Endothelial cell of umbilical vein (primary cell): ENCODE measurements at regions of chr1 and their contacts with region 1.

Region 1: DNA sequence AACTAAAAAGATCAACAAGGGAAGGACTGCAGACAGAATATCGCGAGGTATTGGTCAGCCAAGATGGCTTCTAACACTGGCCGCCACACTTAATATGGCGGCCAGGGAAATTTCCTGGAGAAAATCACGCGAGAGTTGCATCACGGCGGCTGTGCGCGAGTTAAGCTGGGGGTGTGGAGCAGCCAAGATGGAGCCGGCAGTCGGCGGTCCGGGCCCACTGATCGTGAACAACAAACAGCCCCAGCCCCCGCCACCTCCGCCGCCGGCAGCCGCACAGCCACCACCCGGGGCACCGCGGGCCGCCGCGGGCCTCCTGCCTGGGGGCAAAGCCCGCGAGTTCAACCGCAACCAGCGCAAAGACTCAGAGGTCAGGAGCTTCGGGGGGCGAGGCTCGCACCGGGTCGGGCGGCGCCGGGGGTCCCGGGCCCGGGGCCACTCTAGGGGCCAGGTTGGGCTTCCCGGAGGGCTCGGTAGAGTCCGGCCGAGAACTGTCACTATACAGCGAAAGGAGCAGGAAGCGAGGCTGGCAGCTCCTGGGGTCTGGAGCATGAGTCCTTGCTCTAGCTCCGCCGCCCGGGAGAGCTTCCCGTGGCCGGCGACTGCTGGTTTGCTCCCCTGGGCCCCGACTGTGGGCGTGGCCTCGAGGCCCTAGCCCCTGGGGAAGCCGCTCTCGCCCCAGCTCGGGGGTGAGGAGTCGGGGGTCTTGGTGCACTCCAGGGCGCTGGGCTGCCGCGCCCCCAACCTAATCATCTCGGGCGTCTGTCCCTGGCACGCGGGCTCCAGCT is at the start of gene STRIP1:
- DNase-seq: peak; percentile 96
- H3K4me3 ChIP-seq: peak within 1 kb of the TSS; percentile 76 to 90 (median 82)
- H3K27ac ChIP-seq: peak within 1 kb of the TSS; percentile 61
- H3K4me1 ChIP-seq: peaks cover 9% of the 10 kb centered on the region
- H3K27me3 ChIP-seq: no peaks in the 10 kb centered on the region
- CTCF ChIP-seq: no peak
- POLR2A ChIP-seq: peak; percentile 74
- total RNA-seq, gene STRIP1: 38.9 and 42.1 TPM in 2 replicates

Region 2: DNA sequence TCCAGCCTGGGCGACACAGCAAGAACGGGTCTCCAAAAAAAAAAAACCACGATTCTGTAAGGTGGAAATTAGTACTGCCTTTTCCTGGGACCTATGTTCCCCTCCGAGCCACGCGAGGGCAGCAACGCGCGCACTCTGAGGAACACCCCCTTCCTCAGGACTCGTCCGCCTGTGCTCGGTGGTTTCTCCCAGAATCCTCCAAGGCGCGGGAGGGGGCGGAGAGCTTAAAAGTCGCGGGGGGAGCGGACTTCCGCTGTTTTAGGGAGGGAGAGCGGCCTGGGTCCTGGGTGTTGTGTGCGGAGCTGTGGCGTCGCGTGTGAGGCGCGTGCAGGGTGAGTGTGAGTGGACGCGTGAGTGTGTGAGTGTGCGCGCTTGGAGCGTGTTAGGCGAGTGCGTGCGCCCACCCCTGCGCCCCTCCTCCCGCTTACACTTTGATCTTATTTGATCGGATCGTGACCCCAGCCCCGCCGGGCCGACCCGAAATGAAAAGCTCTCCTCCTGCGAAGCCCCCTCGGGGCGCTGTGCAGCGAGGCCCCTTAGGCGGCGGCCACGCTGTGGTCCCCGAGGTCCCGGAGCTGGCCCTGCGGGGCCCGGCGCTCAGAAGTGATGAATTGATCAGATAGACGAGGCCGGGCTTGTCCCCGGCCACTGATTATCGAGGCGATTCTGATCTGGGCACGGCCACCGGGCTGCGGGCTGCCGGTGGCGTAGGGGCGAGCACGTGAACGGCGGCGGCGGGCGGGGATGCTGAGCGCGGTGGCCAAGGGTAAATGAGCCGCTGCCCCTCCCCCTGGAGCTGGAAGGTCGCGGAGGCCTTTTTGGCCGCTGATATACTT is 934.5 kb before region 1 on chr1:
- CTCF ChIA-PET with region 1: no interaction called
- POLR2A ChIA-PET with region 1: no interaction called
- dilution Hi-C with region 1: no loop called
- intact Hi-C with region 1: loop called (anchors 10 kb)
- DNase-seq: peak; percentile 95
- H3K4me3 ChIP-seq: peak overlapping the region; percentile 62 to 97 (median 90)
- H3K27ac ChIP-seq: peak overlapping the region; percentile 76
- H3K4me1 ChIP-seq: no peaks in the 10 kb centered on the region
- H3K27me3 ChIP-seq: no peaks in the 10 kb centered on the region
- CTCF ChIP-seq: peak; percentile 90 to 94
- POLR2A ChIP-seq: peak; percentile 99

Region 3: DNA sequence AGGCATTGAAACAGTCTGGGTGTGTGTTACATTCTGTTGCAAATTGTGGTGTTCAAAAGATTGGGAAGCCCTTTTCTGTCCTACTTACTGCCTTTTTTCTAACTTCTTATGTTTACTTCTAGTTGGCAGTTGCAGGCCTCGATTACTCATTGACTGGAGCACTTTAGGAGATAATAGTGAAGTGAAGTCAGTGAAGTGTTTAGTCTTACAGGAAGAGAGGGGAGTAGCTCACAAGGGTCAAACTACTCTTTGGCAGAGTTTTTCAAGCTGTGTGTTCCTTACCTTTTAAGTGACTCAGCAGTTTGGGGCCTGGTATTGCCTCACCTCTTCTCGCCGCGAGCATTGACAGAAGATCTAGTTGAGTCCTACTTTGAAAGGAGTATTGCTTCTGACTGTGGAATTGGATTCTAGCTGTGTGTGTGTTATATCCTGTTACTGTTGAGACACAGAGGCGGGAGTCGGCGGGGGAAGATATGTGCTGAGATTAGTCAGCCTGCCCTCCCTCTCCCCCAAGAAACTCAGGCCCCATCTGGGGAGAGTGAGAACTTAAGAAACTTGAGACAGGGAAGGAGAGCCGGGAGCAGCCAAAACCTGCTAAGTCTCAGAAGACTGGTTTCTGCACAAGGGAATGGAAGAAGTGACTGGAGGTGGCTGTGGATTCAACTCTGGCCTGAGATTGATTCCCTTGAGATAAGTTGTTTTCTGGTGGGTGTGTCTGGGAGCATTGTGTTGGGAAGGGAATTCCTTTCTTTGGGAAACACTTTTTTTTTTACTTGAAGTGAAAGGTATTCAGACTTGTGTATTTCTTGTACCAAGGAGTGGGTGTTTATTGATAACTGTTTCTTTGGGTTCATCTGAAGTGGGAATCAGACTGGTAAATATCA is 30.7 kb before region 1 on chr1:
- CTCF ChIA-PET with region 1: interaction called, 13 read pairs
- POLR2A ChIA-PET with region 1: no interaction called
- dilution Hi-C with region 1: no loop called
- intact Hi-C with region 1: no loop called
- DNase-seq: peak; percentile 93
- H3K4me3 ChIP-seq: peak overlapping the region in 1 of 3 experiments; percentile 28
- H3K27ac ChIP-seq: peak overlapping the region; percentile 75
- H3K4me1 ChIP-seq: peaks cover 29% of the 10 kb centered on the region
- H3K27me3 ChIP-seq: no peaks in the 10 kb centered on the region
- CTCF ChIP-seq: no peak
- POLR2A ChIP-seq: no peak

Region 4: DNA sequence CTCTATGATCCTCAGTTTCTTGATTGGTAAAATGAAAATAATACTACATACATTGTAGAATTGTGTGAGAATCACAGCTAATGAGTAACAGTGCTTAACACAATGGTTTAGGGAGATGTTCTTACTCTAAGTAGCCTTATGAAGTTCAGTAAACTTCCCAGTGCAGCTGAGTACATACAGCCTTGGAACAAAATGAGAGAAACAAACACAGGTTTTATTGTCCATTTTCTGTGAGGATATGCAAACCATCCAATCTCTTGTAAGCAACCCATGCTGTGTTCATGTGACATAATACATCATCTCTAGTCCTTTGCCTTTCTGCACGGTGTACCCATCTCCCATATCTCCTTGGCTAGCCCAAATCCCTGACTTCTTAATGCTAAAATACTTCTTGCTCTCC is 14.9 kb before region 1 on chr1:
- CTCF ChIA-PET with region 1: interaction called, 13 read pairs
- POLR2A ChIA-PET with region 1: no interaction called
- dilution Hi-C with region 1: no loop called
- intact Hi-C with region 1: no loop called
- DNase-seq: no peak
- H3K4me3 ChIP-seq: no peak overlapping the region
- H3K27ac ChIP-seq: no peak overlapping the region
- H3K4me1 ChIP-seq: no peaks in the 10 kb centered on the region
- H3K27me3 ChIP-seq: no peaks in the 10 kb centered on the region
- CTCF ChIP-seq: no peak
- POLR2A ChIP-seq: no peak

Region 5: DNA sequence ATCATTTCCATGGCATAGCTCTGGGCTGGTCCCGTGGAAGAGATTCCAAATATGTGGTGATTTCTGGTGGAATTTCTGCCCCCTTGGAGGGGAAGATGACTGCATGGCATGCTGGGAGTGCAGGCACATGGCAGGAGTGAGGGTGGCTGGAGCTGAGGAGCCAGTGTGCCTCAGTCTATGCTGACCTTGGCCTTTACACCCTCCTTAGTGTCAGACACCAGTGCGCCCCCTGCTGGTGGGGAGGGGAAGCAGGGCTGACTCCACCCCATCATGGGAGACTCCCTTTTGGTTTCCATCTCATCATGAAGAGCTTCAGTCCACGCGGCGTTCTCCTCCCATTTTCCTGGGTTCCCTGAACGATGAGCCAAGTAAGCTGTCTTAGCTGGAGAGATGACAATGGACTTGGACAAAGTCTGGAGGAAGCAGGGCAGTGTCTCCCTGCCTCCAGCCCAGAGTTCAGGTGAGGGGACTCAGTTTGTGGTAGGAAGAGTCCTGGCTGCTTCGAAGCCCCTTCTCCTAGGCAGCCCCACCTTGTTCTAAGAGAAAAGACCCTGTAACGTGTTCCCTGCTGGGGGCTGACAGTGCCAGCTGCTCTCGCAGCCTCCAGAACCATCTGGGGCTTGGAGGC is 25.5 kb after region 1 on chr1:
- CTCF ChIA-PET with region 1: interaction called, 10 read pairs
- POLR2A ChIA-PET with region 1: no interaction called
- dilution Hi-C with region 1: no loop called
- intact Hi-C with region 1: no loop called
- DNase-seq: peak; percentile 22
- H3K4me3 ChIP-seq: no peak overlapping the region
- H3K27ac ChIP-seq: no peak overlapping the region
- H3K4me1 ChIP-seq: no peaks in the 10 kb centered on the region
- H3K27me3 ChIP-seq: no peaks in the 10 kb centered on the region
- CTCF ChIP-seq: peak; percentile 72 to 92
- POLR2A ChIP-seq: no peak